ENCODE measurements at regions of chr10 and their contacts with region 1.

Region 1: GRCh38 chr10:51960494-51960895 is 261.1 kb upstream of the CSTF2T start:
- DNase-seq: peak; percentile 45
- H3K4me3 ChIP-seq: no peak overlapping the region
- H3K27ac ChIP-seq: no peak overlapping the region
- H3K4me1 ChIP-seq: no peaks in the 10 kb centered on the region
- CTCF ChIP-seq: peak; percentile 80

Region 2: GRCh38 chr10:51001587-51001986 is 958.9 kb before region 1 on chr10:
- CTCF ChIA-PET with region 1: no interaction called
- POLR2A ChIA-PET with region 1: no interaction called
- intact Hi-C with region 1: loop called (anchors 10 kb)
- DNase-seq: peak; percentile 28
- H3K4me3 ChIP-seq: no peak overlapping the region
- H3K27ac ChIP-seq: no peak overlapping the region
- H3K4me1 ChIP-seq: no peaks in the 10 kb centered on the region
- CTCF ChIP-seq: peak; percentile 86

Region 3: GRCh38 chr10:51389415-51390321 is 570.8 kb before region 1 on chr10:
- CTCF ChIA-PET with region 1: no interaction called
- POLR2A ChIA-PET with region 1: no interaction called
- intact Hi-C with region 1: loop called (anchors 5 kb)
- DNase-seq: peak; percentile 51
- H3K4me3 ChIP-seq: no peak overlapping the region
- H3K27ac ChIP-seq: no peak overlapping the region
- H3K4me1 ChIP-seq: no peaks in the 10 kb centered on the region
- CTCF ChIP-seq: peak; percentile 92

Region 4: GRCh38 chr10:52146766-52147165 is 186.3 kb after region 1 on chr10:
- CTCF ChIA-PET with region 1: no interaction called
- POLR2A ChIA-PET with region 1: no interaction called
- intact Hi-C with region 1: no loop called
- DNase-seq: no peak
- H3K4me3 ChIP-seq: no peak overlapping the region
- H3K27ac ChIP-seq: no peak overlapping the region
- H3K4me1 ChIP-seq: no peaks in the 10 kb centered on the region
- CTCF ChIP-seq: no peak

Measured in OCI-LY7 (cell line).